IMR-90 (cell line): ENCODE measurements at regions of chr1 and their contacts with region 1.

Region 1: GRCh38 chr1:150464422-150464826 is 22.8 kb upstream of the TARS2 start:
- DNase-seq: peak; percentile 63
- ATAC-seq: peak; percentile 77
- H3K4me3 ChIP-seq: no peak overlapping the region
- H3K27ac ChIP-seq: no peak overlapping the region
- H3K4me1 ChIP-seq: no peaks in the 10 kb centered on the region
- H3K27me3 ChIP-seq: no peaks in the 10 kb centered on the region
- CTCF ChIP-seq: peak; percentile 74
- POLR2A ChIP-seq: no peak
- RAD21 ChIP-seq: peak; percentile 81

Region 2: GRCh38 chr1:150532868-150533302 is 68.5 kb after region 1 on chr1:
- CTCF ChIA-PET with region 1: no interaction called
- POLR2A ChIA-PET with region 1: no interaction called
- dilution Hi-C with region 1: no loop called
- in situ Hi-C with region 1: no loop called
- intact Hi-C with region 1: loop called (anchors 1 kb)
- DNase-seq: no peak
- ATAC-seq: no peak
- H3K4me3 ChIP-seq: no peak overlapping the region
- H3K27ac ChIP-seq: no peak overlapping the region
- H3K4me1 ChIP-seq: peaks cover 27% of the 10 kb centered on the region
- H3K27me3 ChIP-seq: no peaks in the 10 kb centered on the region
- CTCF ChIP-seq: no peak
- POLR2A ChIP-seq: no peak
- RAD21 ChIP-seq: no peak